PC-3 (cell line): ENCODE measurements at regions of chr15 and their contacts with region 1.

Region 1: GRCh38 chr15:39801641-39802309 is 19.1 kb upstream of the FSIP1 start:
- DNase-seq: peak; percentile 65
- ATAC-seq: peak; percentile 81
- H3K4me3 ChIP-seq: no peak overlapping the region
- H3K27ac ChIP-seq: no peak overlapping the region
- H3K4me1 ChIP-seq: no peaks in the 10 kb centered on the region
- H3K27me3 ChIP-seq: no peaks in the 10 kb centered on the region
- CTCF ChIP-seq: peak; percentile 74

Region 2: DNA sequence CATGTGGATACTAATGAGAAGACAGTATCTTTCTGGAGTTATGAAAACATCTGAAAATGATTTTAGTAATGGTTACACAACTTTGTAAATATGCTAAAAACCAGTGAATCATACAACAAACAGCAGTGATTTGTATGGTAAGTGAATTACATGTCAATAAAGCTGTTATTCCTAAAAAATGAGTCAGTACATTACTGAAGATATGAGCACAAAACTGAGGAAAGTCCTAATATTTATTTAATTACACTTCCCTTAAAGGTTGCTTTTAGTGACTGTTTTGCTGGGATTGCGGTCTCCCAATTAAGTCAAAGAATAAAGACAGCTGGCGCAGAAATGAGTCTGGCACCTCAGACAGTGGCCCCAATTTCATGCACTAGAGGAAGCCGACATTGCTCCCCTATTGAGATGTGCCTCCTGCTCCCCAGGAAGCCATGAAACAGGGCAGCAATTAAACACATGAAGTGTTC is 31.8 kb after region 1 on chr15:
- CTCF ChIA-PET with region 1: no interaction called
- POLR2A ChIA-PET with region 1: no interaction called
- intact Hi-C with region 1: loop called (anchors 2 kb)
- DNase-seq: peak; percentile 86
- ATAC-seq: peak; percentile 91
- H3K4me3 ChIP-seq: peak overlapping the region; percentile 15; the same call in 1 of the 2 replicates
- H3K27ac ChIP-seq: peak overlapping the region; percentile 79
- H3K4me1 ChIP-seq: peaks cover 29% of the 10 kb centered on the region
- H3K27me3 ChIP-seq: no peaks in the 10 kb centered on the region
- CTCF ChIP-seq: no peak